ENCODE measurements at regions of chr14 and their contacts with region 1.

Region 1: DNA sequence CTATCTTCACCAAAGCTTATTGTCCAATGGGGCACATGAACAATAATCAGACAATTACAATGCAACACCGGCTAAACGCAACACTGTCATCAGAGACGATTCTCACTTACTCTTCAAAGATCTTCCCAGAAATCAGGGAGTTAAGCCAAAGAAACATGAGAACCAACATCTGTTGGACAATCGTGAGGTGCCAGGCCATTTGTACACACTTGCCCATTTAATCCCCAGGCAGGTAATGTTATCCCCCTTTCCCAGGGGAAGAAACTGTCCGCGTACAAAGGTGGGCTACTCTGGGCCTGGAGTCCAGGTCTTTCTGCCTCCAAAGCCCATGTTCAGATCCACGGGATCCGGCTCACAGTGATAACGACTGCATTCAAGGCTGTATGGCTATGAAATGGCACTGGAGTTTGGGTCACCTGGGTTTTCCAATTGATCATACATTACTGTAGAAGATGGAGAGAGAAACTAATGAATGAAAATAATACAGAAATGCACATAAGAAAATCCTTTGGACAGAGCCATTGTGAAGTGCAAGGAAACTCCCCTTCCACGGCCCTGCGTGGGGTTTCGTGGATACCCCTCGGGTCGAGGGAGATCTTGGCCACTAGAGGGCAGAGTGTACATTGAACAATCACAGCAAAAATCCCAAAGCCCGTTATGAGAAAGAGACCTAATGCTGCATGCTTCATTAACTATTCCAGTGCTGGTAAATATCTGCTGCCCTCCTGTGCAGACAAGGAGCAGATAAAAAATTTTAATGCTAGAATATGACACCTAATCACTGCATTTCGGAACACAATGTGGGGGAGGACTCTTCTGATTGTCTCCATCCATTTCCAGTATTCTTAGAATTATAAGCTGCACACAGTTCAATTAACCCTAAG is 111.4 kb downstream of the EGLN3 start:
- DNase-seq: peak; percentile 43
- ATAC-seq: no peak
- H3K4me3 ChIP-seq: no peak overlapping the region
- H3K4me3 Mint-ChIP-seq: no peak overlapping the region
- H3K27ac ChIP-seq: no peak overlapping the region
- H3K27ac Mint-ChIP-seq: no peak overlapping the region
- H3K4me1 ChIP-seq: no peaks in the 10 kb centered on the region
- H3K4me1 Mint-ChIP-seq: no peaks in the 10 kb centered on the region
- H3K27me3 ChIP-seq: no peaks in the 10 kb centered on the region
- H3K27me3 Mint-ChIP-seq: peaks cover 3% of the 10 kb centered on the region
- CTCF ChIP-seq: peak; percentile 80

Region 2: DNA sequence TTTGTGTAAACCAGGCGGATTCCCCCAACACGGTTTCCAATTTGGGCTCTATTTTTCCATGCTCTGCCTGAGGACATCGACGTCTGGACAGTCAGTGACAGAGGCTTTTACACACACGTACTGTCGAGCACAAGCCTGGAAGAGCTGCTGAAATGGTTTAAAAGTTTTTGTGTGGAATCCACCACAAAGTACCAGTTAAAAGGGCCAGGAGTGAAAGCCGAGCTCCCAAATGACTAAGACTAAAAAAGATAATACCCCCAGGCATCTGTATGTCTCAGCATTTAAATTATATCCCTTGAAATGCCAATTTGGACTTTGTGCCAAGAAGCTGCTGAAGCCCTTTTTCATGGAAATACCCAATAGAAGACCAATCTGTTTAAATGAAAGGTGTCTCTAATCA is 61.8 kb before region 1 on chr14:
- CTCF ChIA-PET with region 1: no interaction called
- POLR2A ChIA-PET with region 1: no interaction called
- intact Hi-C with region 1: no loop called
- DNase-seq: no peak
- ATAC-seq: no peak
- H3K4me3 ChIP-seq: no peak overlapping the region
- H3K4me3 Mint-ChIP-seq: no peak overlapping the region
- H3K27ac ChIP-seq: no peak overlapping the region
- H3K27ac Mint-ChIP-seq: no peak overlapping the region
- H3K4me1 ChIP-seq: no peaks in the 10 kb centered on the region
- H3K4me1 Mint-ChIP-seq: no peaks in the 10 kb centered on the region
- H3K27me3 ChIP-seq: no peaks in the 10 kb centered on the region
- H3K27me3 Mint-ChIP-seq: no peaks in the 10 kb centered on the region
- CTCF ChIP-seq: no peak

Region 3: DNA sequence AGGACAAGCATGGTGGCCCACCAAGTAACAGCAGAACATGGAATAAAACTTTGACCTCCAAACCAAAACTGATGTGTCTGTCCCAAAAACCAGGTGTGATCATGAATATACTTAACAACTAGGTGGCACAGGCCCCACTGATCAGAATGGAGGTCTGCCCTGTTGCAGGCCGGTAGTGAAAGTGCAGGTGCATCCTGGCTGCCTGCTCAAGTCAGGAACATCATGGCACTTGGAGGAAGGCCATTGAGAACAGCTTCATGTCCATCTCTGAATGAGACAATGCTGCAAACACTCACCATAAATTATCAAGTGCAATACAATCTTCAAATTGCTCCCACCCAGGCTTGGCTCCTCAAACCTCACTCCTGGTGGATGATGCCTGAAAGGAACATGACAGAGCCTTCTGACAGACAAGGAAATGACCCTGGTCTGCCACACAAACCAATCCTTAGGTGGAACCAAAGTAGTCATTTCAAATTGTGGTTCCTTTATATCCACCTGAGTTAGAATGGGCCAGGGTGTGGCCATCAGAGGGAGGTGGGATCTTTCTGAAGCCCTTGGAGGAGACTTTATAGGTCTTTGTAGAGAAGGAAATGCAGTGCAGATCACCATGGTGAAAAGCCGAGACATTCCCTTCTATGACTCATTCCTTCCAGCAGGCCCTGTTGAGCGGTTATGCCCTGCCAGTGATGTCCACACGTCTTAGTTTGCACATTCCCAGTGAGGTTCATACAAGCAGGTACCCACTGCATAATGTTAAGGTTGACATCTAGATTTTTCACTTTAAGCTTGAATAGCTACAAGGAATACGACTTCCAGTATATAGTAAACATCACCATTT is 75.5 kb after region 1 on chr14:
- CTCF ChIA-PET with region 1: no interaction called
- POLR2A ChIA-PET with region 1: no interaction called
- intact Hi-C with region 1: no loop called
- DNase-seq: no peak
- ATAC-seq: no peak
- H3K4me3 ChIP-seq: no peak overlapping the region
- H3K4me3 Mint-ChIP-seq: no peak overlapping the region
- H3K27ac ChIP-seq: no peak overlapping the region
- H3K27ac Mint-ChIP-seq: no peak overlapping the region
- H3K4me1 ChIP-seq: no peaks in the 10 kb centered on the region
- H3K4me1 Mint-ChIP-seq: no peaks in the 10 kb centered on the region
- H3K27me3 ChIP-seq: no peaks in the 10 kb centered on the region
- H3K27me3 Mint-ChIP-seq: no peaks in the 10 kb centered on the region
- CTCF ChIP-seq: no peak

Region 4: DNA sequence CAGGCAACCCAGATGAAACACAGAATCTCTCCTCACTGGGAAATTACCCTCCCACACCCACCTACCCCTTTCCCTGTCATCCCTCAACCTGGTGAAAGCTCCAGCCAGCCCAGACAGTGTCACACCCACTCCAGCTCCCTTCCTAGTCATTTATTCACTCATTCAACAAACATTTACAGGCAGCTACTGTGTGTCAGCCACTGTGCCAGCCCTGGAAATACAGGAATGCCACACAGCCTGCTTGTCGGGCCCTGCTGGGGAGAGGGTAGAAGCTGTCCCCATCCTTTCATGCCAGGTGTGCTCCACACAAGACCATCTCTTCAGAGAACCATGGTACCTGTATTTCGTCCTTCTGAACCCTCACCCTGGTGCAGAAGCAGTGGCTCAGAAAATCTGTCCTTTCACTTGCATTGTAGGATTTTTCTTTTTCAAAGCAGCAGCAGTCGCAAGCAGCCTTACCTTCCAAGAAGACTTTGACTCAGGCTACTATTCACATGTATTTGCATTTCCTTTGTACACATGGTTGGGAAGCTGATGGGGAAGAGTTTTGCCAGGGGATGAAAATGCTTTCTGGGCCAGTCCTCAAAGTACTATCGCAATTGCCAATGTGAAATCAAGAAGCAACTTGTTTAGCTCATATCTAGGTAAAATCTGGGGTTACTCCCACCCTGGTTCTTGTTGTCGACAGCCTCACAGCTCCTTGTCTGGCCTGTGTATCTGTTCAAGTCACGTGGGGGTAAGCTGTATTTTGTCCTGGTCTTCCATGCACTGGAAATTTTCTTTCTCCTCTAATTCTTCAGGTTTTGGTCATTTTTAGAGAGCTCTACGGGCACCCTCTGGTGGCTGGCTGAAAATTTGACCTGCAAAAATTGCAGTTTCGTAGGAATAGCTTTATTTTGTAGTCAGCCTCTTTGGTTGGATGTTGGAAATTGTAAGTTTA is 258.9 kb after region 1 on chr14:
- CTCF ChIA-PET with region 1: interaction called, 8 read pairs
- POLR2A ChIA-PET with region 1: no interaction called
- intact Hi-C with region 1: loop called (anchors 2 kb)
- DNase-seq: peak; percentile 6
- ATAC-seq: no peak
- H3K4me3 ChIP-seq: no peak overlapping the region
- H3K4me3 Mint-ChIP-seq: no peak overlapping the region
- H3K27ac ChIP-seq: no peak overlapping the region
- H3K27ac Mint-ChIP-seq: no peak overlapping the region
- H3K4me1 ChIP-seq: no peaks in the 10 kb centered on the region
- H3K4me1 Mint-ChIP-seq: no peaks in the 10 kb centered on the region
- H3K27me3 ChIP-seq: no peaks in the 10 kb centered on the region
- H3K27me3 Mint-ChIP-seq: no peaks in the 10 kb centered on the region
- CTCF ChIP-seq: no peak

Region 5: GRCh38 chr14:34227834-34228649 is 388.6 kb after region 1 on chr14:
- CTCF ChIA-PET with region 1: no interaction called
- POLR2A ChIA-PET with region 1: no interaction called
- intact Hi-C with region 1: loop called (anchors 5 kb)
- DNase-seq: peak; percentile 16
- ATAC-seq: no peak
- H3K4me3 ChIP-seq: no peak overlapping the region
- H3K4me3 Mint-ChIP-seq: no peak overlapping the region
- H3K27ac ChIP-seq: no peak overlapping the region
- H3K27ac Mint-ChIP-seq: no peak overlapping the region
- H3K4me1 ChIP-seq: no peaks in the 10 kb centered on the region
- H3K4me1 Mint-ChIP-seq: no peaks in the 10 kb centered on the region
- H3K27me3 ChIP-seq: peaks cover 0 to 4% (median 2%) of the 10 kb centered on the region in 4 experiments
- H3K27me3 Mint-ChIP-seq: peaks cover 4% of the 10 kb centered on the region
- CTCF ChIP-seq: peak; percentile 46

Region 6: DNA sequence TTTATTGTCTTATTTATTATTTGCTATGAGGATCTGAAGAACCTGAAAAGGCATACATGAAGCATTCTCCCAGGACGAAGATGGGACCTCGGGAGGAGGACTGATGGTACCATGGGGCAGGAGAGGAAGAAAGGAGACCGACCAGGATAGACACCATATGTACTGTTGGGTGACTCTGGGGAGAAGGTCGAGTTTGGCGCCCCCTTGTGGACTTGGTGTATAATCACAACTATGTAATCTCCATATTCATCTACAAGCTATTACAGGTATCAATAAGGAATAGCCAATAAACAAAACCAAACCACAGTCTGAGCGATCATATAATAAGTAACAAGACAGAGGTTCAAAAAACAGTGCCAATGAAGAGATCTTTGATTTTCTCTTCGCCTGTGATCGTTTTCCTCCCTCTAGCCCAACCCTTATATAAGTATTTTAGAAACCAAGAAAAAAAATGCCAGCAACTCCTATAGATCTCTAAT is 483.5 kb after region 1 on chr14:
- CTCF ChIA-PET with region 1: interaction called, 4 read pairs
- POLR2A ChIA-PET with region 1: no interaction called
- intact Hi-C with region 1: loop called (anchors 2 kb)
- DNase-seq: peak; percentile 69
- ATAC-seq: peak; percentile 60
- H3K4me3 ChIP-seq: no peak overlapping the region
- H3K4me3 Mint-ChIP-seq: no peak overlapping the region
- H3K27ac ChIP-seq: no peak overlapping the region
- H3K27ac Mint-ChIP-seq: no peak overlapping the region
- H3K4me1 ChIP-seq: no peaks in the 10 kb centered on the region
- H3K4me1 Mint-ChIP-seq: no peaks in the 10 kb centered on the region
- H3K27me3 ChIP-seq: no peaks in the 10 kb centered on the region
- H3K27me3 Mint-ChIP-seq: peaks cover 12% of the 10 kb centered on the region
- CTCF ChIP-seq: peak; percentile 82